WTC11 (cell line): ENCODE measurements at regions of chr7 and their contacts with region 1.

Region 1: DNA sequence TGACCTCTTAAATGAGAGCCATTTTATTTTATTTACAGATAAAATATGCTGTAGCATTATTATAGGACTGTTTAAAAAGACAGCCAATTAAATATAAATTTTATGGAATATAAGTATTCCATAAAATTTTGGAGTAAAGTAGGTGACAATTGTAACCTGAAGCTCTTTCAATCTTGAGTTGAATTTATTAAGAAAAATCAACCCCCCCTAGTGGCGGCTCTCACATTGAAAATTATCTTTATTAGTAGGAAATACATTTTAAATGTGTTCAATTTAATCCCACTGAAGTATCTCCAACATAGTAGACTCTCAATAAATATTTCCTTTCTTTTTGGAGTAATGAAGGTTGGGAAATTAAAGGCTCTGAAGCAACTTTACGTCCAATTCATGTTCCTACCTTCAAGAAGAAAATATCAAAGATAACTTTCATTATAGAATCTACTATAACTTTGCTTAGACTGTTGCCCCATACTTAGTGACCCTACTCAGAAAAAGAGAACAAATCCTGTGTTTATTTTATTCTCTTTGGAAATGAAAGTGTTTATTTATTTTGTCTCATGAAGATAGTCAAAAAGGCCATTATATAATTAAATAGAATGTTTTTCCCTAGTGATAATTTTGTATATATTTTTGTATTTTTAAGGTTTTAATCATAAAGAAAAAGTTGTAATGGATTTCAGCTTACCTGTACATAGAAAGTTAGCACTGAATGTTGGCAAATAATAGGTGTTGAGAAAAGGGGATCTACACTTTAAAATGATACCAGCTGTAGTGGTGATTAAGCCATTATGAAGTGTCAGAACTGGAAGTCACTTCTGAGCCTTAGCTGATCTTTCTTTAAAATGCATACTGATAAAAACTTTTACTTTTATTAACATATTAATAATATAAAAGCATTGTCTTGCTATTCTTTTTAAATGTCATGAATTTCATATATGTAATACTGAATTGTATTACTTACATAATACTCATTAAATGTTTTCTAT is 3.3 kb downstream of the AHR start:
- DNase-seq: no peak
- ATAC-seq: no peak
- H3K4me3 Mint-ChIP-seq: no peak overlapping the region
- H3K27ac Mint-ChIP-seq: no peak overlapping the region
- H3K4me1 Mint-ChIP-seq: peaks cover 43% of the 10 kb centered on the region
- H3K27me3 Mint-ChIP-seq: peaks cover 11% of the 10 kb centered on the region; the same call in 1 of the 2 replicates
- CTCF ChIP-seq: peak; percentile 53

Region 2: GRCh38 chr7:17275749-17276671 is 25.8 kb before region 1 on chr7:
- CTCF ChIA-PET with region 1: interaction called, 12 read pairs
- POLR2A ChIA-PET with region 1: no interaction called
- DNase-seq: no peak
- ATAC-seq: no peak
- H3K4me3 Mint-ChIP-seq: no peak overlapping the region
- H3K27ac Mint-ChIP-seq: no peak overlapping the region
- H3K4me1 Mint-ChIP-seq: peaks cover 5% of the 10 kb centered on the region; the same call in 1 of the 2 replicates
- H3K27me3 Mint-ChIP-seq: no peaks in the 10 kb centered on the region
- CTCF ChIP-seq: no peak

Region 3: DNA sequence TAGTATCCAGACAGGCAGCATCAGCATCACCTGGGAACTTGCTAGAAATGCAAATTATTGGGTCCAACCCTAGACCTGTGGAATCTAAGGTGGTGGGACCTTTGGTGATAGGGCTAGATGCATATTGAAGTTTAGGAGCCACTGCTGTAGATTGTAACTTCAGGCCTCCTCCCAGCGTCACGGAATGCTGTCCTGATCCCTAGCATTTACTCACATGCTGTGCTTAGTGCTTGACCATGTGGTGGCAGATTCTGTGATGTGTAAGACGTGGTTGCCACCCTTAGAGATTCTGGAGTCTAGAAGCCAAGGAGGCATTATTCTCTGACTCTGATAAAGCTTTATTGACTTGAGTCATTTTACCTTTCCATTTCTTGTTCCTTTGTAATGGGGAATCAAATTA is 10.2 kb after region 1 on chr7:
- CTCF ChIA-PET with region 1: interaction called, 25 read pairs
- POLR2A ChIA-PET with region 1: interaction called, 3 read pairs
- DNase-seq: peak; percentile 16
- ATAC-seq: peak; percentile 85
- H3K4me3 Mint-ChIP-seq: no peak overlapping the region
- H3K27ac Mint-ChIP-seq: no peak overlapping the region
- H3K4me1 Mint-ChIP-seq: peaks cover 56% of the 10 kb centered on the region
- H3K27me3 Mint-ChIP-seq: no peaks in the 10 kb centered on the region
- CTCF ChIP-seq: no peak

Region 4: DNA sequence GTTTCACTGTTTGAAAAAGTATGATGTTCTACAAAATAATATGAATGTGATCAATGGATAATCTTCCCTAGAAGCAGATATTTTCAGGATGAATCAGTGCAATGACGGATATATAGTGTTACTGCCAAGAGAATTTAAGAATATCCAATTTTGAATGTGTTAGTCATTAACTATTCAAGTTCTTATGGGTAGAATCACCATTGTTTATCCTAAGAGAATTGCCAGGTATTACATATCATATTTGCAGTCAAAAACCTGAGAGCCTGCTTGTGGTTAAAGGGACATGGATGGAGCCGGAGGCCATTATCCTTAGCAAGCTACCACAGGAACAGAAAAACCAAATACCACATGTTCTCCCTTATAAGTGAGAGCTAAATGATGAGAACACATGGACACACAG is 23.6 kb after region 1 on chr7:
- CTCF ChIA-PET with region 1: no interaction called
- POLR2A ChIA-PET with region 1: no interaction called
- DNase-seq: no peak
- ATAC-seq: no peak
- H3K4me3 Mint-ChIP-seq: no peak overlapping the region
- H3K27ac Mint-ChIP-seq: no peak overlapping the region
- H3K4me1 Mint-ChIP-seq: peaks cover 4% of the 10 kb centered on the region
- H3K27me3 Mint-ChIP-seq: no peaks in the 10 kb centered on the region
- CTCF ChIP-seq: no peak

Region 5: GRCh38 chr7:17392846-17393245 is 91.1 kb after region 1 on chr7:
- CTCF ChIA-PET with region 1: no interaction called
- POLR2A ChIA-PET with region 1: no interaction called
- DNase-seq: no peak
- ATAC-seq: no peak
- H3K4me3 Mint-ChIP-seq: no peak overlapping the region
- H3K27ac Mint-ChIP-seq: no peak overlapping the region
- H3K4me1 Mint-ChIP-seq: peaks cover 18% of the 10 kb centered on the region
- H3K27me3 Mint-ChIP-seq: peaks cover 3% of the 10 kb centered on the region; the same call in 1 of the 2 replicates
- CTCF ChIP-seq: no peak